Sigmoid colon (tissue), 7 donors: ENCODE measurements at regions of chr19 and their contacts with region 1.

Region 1: DNA sequence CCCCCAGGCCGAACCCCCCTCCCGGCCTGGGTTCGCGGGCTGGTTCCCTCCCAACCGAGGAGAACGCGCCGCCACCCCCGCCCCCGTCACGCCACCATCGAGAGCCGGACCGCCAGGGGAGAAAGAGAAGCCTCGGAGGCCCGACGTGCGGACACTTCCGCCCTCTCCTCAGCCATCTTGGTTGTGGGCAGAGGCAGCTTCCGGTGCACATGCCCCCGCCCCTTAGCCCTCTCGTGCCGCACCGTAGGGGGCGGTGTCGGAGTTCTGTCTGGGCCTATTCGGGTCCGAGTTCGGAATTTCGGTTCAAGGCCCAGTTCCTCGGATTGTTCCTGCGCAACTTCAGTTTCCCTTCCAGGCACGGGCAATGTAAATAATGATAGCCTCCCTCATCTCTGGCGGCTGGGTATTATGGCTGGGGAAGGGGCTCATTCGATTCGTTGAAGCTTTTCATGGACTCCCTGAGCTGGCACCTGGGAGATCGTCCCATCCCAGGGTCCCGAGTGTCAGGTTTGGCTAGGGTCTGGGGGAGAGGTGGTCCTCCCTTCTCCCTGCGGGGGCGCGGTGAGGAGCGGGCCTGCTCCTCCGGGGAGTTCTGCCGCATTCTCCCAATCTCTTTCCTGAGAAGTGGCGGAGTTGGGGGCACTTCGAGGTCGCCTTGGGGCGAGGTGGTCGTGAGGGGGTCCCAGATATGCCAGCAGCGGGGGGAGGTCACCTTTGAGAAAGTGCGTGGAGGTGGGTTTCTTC is at the starts of genes IER2 and STX10:
- DNase-seq: peak; percentile 99
- H3K4me3 ChIP-seq: peak within 1 kb of the TSS; percentile 64 to 96 (median 92)
- H3K27ac ChIP-seq: peak within 1 kb of the TSS; percentile 92 to 100 (median 100)
- H3K4me1 ChIP-seq: peaks cover 6 to 30% (median 22%) of the 10 kb centered on the region in 4 donors
- H3K27me3 ChIP-seq: no peaks in the 10 kb centered on the region
- CTCF ChIP-seq: peak in 3 of 4 experiments; percentile 42 to 58 (median 43)
- EP300 ChIP-seq: peak in 1 of 4 donors; percentile 52
- POLR2A ChIP-seq: peak; percentile 84 to 92
- total RNA-seq, gene IER2: 30.3 to 215 (median 85.6) TPM
- total RNA-seq, gene STX10: 65.3 to 87.0 (median 76.8) TPM

Region 2: DNA sequence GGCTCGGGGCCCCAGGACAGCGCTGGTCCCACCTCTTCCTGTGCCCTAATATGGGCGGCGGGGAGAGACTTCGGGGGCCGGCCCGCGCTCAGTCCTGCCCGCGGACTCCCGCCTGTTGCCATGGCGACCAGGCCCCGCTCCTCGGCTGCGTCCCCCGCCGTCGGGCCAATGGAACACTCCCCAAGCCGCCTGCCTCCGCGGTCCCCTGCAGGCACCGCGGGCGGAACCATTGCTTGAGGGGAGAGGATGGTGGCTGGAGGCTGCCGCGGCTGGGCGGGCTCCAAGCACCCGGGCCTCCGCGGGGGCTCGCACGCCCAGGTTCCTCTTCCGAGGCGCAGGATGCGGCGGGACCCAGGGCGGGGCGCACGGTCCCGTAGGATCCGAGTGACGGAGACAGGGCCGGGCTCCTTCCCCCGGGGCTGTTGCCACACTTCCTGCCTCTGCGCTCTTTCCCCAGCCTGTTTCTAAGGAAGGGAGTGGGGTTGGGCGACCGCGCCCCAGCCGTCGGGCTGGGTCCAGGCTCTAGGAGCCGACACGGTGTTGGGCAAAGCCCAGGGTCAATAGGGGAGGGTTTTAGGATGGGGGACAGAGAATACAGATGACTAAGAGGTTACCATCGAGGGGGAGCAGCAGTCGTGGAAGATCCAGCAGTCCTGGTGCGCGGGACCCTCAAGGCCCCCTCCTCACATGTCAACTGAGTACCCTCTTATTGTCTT is 360.3 kb before region 1 on chr19:
- intact Hi-C with region 1: loop called (anchors 5 kb)
- DNase-seq: peak; percentile 99
- H3K4me3 ChIP-seq: peak overlapping the region; percentile 72 to 99 (median 90)
- H3K27ac ChIP-seq: peak overlapping the region; percentile 97 to 100 (median 98)
- H3K4me1 ChIP-seq: peaks cover 0 to 58% (median 55%) of the 10 kb centered on the region in 4 donors
- H3K27me3 ChIP-seq: no peaks in the 10 kb centered on the region
- CTCF ChIP-seq: no peak
- EP300 ChIP-seq: peak in 2 of 4 donors; percentile 56 to 84
- POLR2A ChIP-seq: peak; percentile 96 to 97

Region 3: DNA sequence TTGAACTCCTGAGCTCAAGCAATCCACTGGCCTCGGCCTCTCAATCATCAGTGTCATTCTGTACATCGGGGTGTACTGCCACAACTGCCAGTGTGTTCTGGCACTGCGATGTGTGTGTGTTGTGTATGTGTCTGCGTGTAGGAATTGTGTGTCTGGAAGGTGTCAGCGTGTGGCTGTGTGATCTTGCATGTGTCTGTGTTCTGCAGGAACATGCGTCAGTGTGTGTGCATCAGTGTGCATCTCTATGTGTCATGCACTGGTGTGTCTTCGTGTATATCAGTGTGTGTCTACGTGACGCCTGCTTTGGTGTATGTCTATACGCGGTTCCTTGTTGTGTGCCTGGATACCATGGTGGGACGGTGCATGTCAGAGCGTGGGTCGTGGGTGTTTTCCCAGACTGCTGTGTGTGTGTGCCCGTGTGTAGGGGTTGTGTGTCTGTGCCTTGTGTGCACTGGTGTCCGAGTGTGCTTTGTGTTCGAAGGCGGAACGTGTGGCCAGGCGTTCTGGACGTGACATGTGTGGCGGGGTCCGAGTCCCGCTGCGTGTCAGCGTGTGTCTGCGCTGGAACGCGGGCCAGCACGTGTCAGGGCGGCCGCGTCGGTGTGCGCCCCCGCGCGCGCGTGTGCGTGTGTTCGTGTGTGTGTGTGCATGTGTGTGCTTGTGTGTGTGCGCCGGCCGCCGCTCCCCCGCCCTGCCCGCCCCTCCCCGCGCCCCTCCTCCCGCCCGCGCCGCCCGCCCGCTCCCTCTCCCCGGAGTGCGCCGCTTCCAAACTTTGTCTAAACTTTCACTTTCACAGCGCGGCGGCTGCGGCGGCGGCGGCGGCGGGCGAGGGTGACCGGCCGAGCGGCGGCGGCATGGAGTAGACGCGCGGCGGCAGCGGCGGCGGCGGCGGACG is 155.4 kb before region 1 on chr19 and contains the start of gene NFIX:
- intact Hi-C with region 1: loop called (anchors 10 kb)
- DNase-seq: peak; percentile 86
- H3K4me3 ChIP-seq: peak within 1 kb of the TSS; percentile 86 to 97 (median 90)
- H3K27ac ChIP-seq: peak within 1 kb of the TSS; percentile 92 to 98 (median 98)
- H3K4me1 ChIP-seq: peaks cover 0 to 39% (median 35%) of the 10 kb centered on the region in 4 donors
- H3K27me3 ChIP-seq: no peaks in the 10 kb centered on the region
- CTCF ChIP-seq: no peak
- EP300 ChIP-seq: no peak
- POLR2A ChIP-seq: no peak
- total RNA-seq, gene NFIX: 44.1 to 104 (median 58.5) TPM

Region 4: GRCh38 chr19:13104360-13104847 is 46.0 kb before region 1 on chr19:
- intact Hi-C with region 1: loop called (anchors 5 kb)
- DNase-seq: peak; percentile 86
- H3K4me3 ChIP-seq: peak overlapping the region in 3 of 4 donors; percentile 7 to 29 (median 17)
- H3K27ac ChIP-seq: peak overlapping the region; percentile 74 to 95 (median 86)
- H3K4me1 ChIP-seq: peaks cover 0 to 40% (median 31%) of the 10 kb centered on the region in 4 donors
- H3K27me3 ChIP-seq: no peaks in the 10 kb centered on the region
- CTCF ChIP-seq: peak; percentile 62 to 84 (median 76)
- EP300 ChIP-seq: peak in 1 of 4 donors; percentile 47
- POLR2A ChIP-seq: no peak

Region 5: DNA sequence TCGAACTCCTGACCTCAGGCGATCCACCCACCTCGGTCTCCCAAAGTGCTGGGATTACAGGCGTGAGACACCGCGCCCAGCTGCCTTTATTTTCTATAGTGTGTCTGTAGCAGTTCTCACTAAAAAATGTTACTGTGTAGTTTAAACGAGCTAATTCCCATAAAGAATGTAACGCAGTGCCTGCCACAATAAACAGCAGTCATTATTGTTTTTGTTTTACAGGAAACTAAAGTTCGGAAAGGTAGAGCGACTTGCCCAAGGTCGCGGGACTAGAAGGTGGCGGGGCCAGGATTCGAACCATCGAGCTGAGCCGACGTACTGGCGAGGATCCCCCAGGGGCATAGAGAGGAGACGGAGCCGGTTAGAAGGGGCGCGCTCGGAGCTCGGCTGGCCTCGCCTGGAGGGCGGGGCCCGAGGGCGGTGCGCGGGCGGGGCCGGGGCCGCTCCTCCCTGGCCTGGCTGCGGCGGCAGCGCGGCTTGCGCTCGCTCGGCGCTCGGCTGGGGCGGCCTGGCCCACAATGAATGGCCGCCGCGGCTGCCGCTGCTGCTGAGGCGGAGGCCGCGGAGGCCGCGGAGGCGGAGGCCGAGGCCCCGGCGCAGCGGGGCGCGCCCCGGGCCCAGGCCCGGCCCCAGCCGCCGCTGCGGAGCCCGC is 32.5 kb before region 1 on chr19 and contains the start of gene NACC1:
- intact Hi-C with region 1: loop called (anchors 5 kb)
- DNase-seq: peak; percentile 93
- H3K4me3 ChIP-seq: peak within 1 kb of the TSS; percentile 91 to 99 (median 96)
- H3K27ac ChIP-seq: peak within 1 kb of the TSS; percentile 74 to 83 (median 78)
- H3K4me1 ChIP-seq: peaks cover 0 to 49% (median 43%) of the 10 kb centered on the region in 4 donors
- H3K27me3 ChIP-seq: no peaks in the 10 kb centered on the region
- CTCF ChIP-seq: no peak
- EP300 ChIP-seq: no peak
- POLR2A ChIP-seq: no peak
- total RNA-seq, gene NACC1: 8.1 to 20.5 (median 17.3) TPM

Region 6: GRCh38 chr19:13262450-13262849 is 112.1 kb after region 1 on chr19:
- intact Hi-C with region 1: loop called (anchors 2 kb)
- DNase-seq: no peak
- H3K4me3 ChIP-seq: no peak overlapping the region
- H3K27ac ChIP-seq: no peak overlapping the region
- H3K4me1 ChIP-seq: no peaks in the 10 kb centered on the region
- H3K27me3 ChIP-seq: peaks cover 0 to 7% (median 0%) of the 10 kb centered on the region in 3 donors
- CTCF ChIP-seq: peak; percentile 43 to 56 (median 49)
- EP300 ChIP-seq: no peak
- POLR2A ChIP-seq: no peak